PC-9 (cell line): ENCODE measurements at regions of chr15 and their contacts with region 1.

Region 1: GRCh38 chr15:99442252-99442897 is 123.4 kb upstream of the MEF2A start:
- DNase-seq: peak; percentile 80
- H3K4me3 ChIP-seq: peak overlapping the region; percentile 32; the same call in 1 of the 2 replicates
- H3K27ac ChIP-seq: peak overlapping the region; percentile 75
- H3K4me1 ChIP-seq: peaks cover 24% of the 10 kb centered on the region
- H3K27me3 ChIP-seq: no peaks in the 10 kb centered on the region
- CTCF ChIP-seq: no peak

Region 2: DNA sequence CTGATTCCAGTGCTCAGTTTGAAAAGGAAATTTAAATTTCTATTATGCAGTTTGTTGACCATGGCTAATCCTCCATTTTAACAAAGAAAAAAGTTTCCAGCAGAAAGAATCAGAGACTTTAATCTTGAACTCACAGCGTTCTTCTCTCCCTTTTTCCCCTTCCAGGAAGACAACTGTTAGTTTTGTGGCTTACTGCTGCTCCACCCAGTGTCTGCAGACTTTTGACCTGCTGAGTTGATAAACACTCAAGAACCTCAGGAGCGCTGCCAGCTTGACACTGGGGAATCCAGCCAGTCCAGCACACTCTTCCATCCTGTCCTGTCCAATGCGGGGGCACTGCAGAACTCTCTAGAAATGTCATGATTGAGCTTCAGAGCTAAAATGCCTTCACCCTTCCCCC is 56.5 kb before region 1 on chr15:
- CTCF ChIA-PET with region 1: no interaction called
- POLR2A ChIA-PET with region 1: no interaction called
- intact Hi-C with region 1: no loop called
- DNase-seq: peak in 1 of 2 experiments; percentile 35
- H3K4me3 ChIP-seq: no peak overlapping the region
- H3K27ac ChIP-seq: no peak overlapping the region
- H3K4me1 ChIP-seq: peaks cover 15% of the 10 kb centered on the region
- H3K27me3 ChIP-seq: no peaks in the 10 kb centered on the region
- CTCF ChIP-seq: no peak

Region 3: GRCh38 chr15:99454941-99455788 is 12.8 kb after region 1 on chr15:
- CTCF ChIA-PET with region 1: no interaction called
- POLR2A ChIA-PET with region 1: no interaction called
- intact Hi-C with region 1: loop called (anchors 1 kb)
- DNase-seq: peak; percentile 86 to 92
- H3K4me3 ChIP-seq: no peak overlapping the region
- H3K27ac ChIP-seq: peak overlapping the region; percentile 81
- H3K4me1 ChIP-seq: peaks cover 17% of the 10 kb centered on the region
- H3K27me3 ChIP-seq: no peaks in the 10 kb centered on the region
- CTCF ChIP-seq: no peak